OCI-LY7 (cell line): ENCODE measurements at regions of chr1 and their contacts with region 1.

Region 1: GRCh38 chr1:87045761-87046304 is 131.4 kb downstream of the HS2ST1 start:
- DNase-seq: peak; percentile 48
- H3K4me3 ChIP-seq: no peak overlapping the region
- H3K27ac ChIP-seq: peak overlapping the region; percentile 46
- H3K4me1 ChIP-seq: peaks cover 72% of the 10 kb centered on the region
- CTCF ChIP-seq: no peak

Region 2: DNA sequence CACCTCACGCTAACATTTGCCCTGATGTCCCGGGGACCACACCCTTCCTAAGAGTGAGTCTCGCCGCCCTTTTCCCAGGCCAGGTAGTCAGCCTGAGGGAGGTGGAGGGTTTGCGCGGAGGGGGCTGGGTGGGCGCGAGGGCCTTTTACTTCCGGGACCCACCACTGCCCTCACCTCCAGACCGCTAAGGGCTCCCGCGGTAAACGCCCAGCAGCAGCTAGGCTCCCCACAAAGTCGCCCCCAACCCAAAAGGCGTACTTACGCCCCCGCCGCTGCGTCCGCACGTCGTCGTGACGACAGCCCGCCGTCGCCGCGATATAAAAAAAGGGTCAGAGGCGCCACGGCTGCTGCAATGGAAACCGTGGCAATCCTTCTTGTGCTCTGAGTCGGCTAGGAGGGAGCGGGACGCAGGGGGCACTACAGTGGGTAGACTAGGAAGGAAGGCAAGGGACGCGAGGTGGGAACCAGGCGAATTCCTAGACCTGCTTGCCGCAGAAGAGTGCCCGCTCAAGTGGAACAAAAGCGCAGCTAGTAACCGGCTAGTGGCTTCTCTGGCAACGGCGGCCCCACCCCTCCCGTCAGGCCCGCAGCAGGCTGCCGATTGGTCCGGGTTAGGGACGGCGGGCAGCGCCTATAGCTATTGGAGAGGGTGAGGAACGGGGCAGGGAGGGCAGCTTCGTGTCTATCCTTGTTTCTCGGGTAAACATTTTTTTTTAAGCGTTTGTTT is 649.9 kb before region 1 on chr1 and contains the start of gene ODF2L:
- CTCF ChIA-PET with region 1: no interaction called
- POLR2A ChIA-PET with region 1: no interaction called
- intact Hi-C with region 1: no loop called
- DNase-seq: peak; percentile 88
- H3K4me3 ChIP-seq: peak within 1 kb of the TSS; percentile 83
- H3K27ac ChIP-seq: peak within 1 kb of the TSS; percentile 74
- H3K4me1 ChIP-seq: peaks cover 28% of the 10 kb centered on the region
- CTCF ChIP-seq: no peak
- total RNA-seq, gene ODF2L: 24.7 and 26.2 TPM in 2 replicates

Region 3: GRCh38 chr1:87034351-87034750 is 11.5 kb before region 1 on chr1:
- CTCF ChIA-PET with region 1: no interaction called
- POLR2A ChIA-PET with region 1: interaction called, 18 read pairs
- intact Hi-C with region 1: no loop called
- DNase-seq: no peak
- H3K4me3 ChIP-seq: no peak overlapping the region
- H3K27ac ChIP-seq: no peak overlapping the region
- H3K4me1 ChIP-seq: no peaks in the 10 kb centered on the region
- CTCF ChIP-seq: no peak

Region 4: DNA sequence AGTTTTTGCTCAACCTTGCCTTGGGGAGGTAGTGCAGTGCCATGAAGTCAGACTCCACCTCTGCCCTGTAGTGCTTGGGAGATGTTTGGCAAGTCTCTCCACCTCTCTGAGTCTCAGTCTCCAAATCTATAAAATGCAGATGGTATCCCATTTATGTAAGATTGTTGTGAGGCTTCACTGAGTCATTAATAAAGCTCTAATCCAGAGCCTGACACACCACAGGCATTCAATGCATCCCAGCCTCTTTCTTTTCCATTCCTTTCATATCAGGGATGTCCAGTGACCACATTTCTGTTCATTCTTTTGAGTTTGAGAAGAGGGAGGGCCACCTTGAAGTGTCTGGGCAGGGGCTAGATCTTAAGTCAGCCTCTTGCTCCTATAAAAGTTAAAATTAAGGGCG is 245.3 kb after region 1 on chr1:
- CTCF ChIA-PET with region 1: no interaction called
- POLR2A ChIA-PET with region 1: no interaction called
- intact Hi-C with region 1: no loop called
- DNase-seq: no peak
- H3K4me3 ChIP-seq: no peak overlapping the region
- H3K27ac ChIP-seq: no peak overlapping the region
- H3K4me1 ChIP-seq: no peaks in the 10 kb centered on the region
- CTCF ChIP-seq: no peak